ENCODE measurements at regions of chr22 and their contacts with region 1.

Region 1: DNA sequence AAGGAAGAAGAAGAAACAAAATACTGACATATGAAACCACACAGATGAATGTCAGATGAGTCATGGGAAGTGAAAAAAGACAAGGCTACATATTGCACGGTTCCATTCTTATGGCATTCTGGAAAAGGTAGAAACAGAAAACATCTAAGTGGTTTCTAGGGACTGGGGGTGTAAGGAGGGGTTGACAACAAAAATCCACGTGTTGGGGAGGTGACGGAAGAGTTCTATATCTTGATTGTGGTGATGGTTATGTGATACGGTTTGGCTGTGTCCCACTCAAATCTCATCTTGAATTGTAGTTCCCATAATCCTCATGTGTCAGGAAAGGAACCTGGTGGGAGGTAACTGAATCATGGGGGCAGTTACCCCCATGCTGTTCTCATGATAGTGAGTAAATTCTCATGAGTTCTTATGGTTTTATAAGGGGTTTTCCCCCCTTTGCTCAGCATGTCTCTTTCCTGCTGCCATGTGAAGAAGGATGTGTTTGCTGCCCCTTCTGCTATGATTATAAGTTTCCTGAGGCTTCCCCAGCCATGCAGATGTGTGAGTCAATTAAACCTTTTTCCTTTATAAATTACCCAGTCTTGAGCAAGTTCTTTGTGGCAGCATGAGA is 6.4 kb upstream of the ARFGAP3 start:
- DNase-seq: no peak
- H3K4me3 ChIP-seq: no peak overlapping the region
- H3K27me3 ChIP-seq: no peaks in the 10 kb centered on the region
- CTCF ChIP-seq: no peak

Region 2: DNA sequence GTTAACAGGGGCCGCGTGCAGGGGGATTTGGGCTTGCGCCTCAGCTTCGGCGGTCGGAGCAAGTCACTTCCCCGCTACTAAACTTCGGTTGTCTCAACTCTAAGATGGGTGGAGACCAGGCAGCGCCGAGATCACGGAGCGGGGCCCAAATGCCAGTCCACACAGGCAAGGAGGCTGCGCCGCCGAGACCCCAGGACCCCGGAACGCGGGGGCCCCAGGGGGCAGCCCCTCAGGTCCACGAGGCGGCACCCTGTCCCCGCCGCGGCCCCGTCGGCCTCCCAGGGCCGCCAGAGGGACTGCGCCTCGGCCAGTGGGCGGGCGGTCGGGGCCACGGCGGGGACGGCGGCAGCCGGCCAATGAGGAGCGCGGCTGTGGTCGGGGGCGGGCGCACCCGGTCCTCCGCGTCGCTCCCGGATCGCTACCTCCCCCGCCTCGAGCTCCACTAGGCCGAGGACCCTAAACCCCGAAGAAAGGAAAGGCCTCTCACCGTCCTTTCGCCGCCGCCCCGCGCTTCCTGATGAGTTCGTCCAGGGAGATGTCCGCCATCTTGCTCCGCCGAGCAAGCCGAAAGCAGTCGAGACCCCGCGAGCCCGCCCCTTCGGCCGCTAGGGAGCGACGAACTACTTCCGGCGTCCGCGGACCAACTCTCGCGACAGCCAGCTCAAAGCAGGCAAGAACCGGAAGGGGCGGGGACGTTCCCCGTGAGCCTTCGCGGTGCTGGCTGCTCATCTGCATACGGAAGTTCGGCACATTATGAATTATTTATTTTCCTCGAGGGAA is 249.0 kb before region 1 on chr22 and contains the start of gene POLDIP3:
- CTCF ChIA-PET with region 1: no interaction called
- POLR2A ChIA-PET with region 1: interaction called, 12 read pairs
- DNase-seq: peak; percentile 81
- H3K4me3 ChIP-seq: peak within 1 kb of the TSS; percentile 66
- H3K27me3 ChIP-seq: no peaks in the 10 kb centered on the region
- CTCF ChIP-seq: peak; percentile 40
- polyA plus RNA-seq, gene POLDIP3: 46.2 and 54.3 TPM in 2 replicates

Region 3: GRCh38 chr22:42876041-42876440 is 12.6 kb after region 1 on chr22:
- CTCF ChIA-PET with region 1: no interaction called
- POLR2A ChIA-PET with region 1: no interaction called
- DNase-seq: no peak
- H3K4me3 ChIP-seq: no peak overlapping the region
- H3K27me3 ChIP-seq: no peaks in the 10 kb centered on the region
- CTCF ChIP-seq: no peak

Region 4: GRCh38 chr22:43036282-43036829 is 172.9 kb after region 1 on chr22:
- CTCF ChIA-PET with region 1: interaction called, 15 read pairs
- POLR2A ChIA-PET with region 1: no interaction called
- DNase-seq: peak; percentile 78
- H3K4me3 ChIP-seq: no peak overlapping the region
- H3K27me3 ChIP-seq: no peaks in the 10 kb centered on the region
- CTCF ChIP-seq: no peak